GM10248 (cell line): ENCODE measurements at regions of chr17 and their contacts with region 1.

Region 1: GRCh38 chr17:4375039-4375748 is 8.7 kb upstream of the UBE2G1 start:
- DNase-seq: peak; percentile 71
- CTCF ChIP-seq: no peak

Region 2: GRCh38 chr17:4043862-4044261 is 331.3 kb before region 1 on chr17:
- CTCF ChIA-PET with region 1: no interaction called
- POLR2A ChIA-PET with region 1: no interaction called
- DNase-seq: no peak
- CTCF ChIP-seq: no peak

Region 3: GRCh38 chr17:4395111-4395478 is 19.9 kb after region 1 on chr17:
- CTCF ChIA-PET with region 1: interaction called, 10 read pairs
- POLR2A ChIA-PET with region 1: no interaction called
- DNase-seq: no peak
- CTCF ChIP-seq: no peak

Region 4: GRCh38 chr17:4426499-4427208 is 51.5 kb after region 1 on chr17:
- CTCF ChIA-PET with region 1: no interaction called
- POLR2A ChIA-PET with region 1: no interaction called
- DNase-seq: no peak
- CTCF ChIP-seq: no peak